MCF 10A (cell line): ENCODE measurements at regions of chr4 and their contacts with region 1.

Region 1: DNA sequence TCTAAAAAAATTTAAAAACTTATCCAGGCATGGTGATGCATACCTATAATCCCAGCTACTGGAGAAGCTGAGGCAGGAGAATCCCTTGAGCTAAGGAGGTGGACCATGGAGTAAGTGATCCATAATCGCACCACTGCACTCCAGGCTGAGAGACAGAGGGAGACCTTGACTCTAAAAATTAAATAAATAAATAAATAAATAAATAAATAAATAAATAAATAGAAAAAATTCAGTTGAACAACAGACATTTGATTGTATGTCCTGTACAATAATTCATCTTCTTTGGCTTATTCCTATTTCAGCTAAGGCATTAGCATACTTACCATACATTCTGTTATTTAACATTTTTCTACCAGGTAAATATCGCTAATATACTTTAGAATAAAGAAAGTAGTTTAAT is 726.1 kb upstream of the GALNTL6 start:
- DNase-seq: no peak
- H3K4me3 Mint-ChIP-seq: no peak overlapping the region
- H3K27ac Mint-ChIP-seq: no peak overlapping the region
- H3K4me1 Mint-ChIP-seq: peaks cover 3% of the 10 kb centered on the region
- H3K27me3 Mint-ChIP-seq: no peaks in the 10 kb centered on the region
- CTCF ChIP-seq: no peak

Region 2: DNA sequence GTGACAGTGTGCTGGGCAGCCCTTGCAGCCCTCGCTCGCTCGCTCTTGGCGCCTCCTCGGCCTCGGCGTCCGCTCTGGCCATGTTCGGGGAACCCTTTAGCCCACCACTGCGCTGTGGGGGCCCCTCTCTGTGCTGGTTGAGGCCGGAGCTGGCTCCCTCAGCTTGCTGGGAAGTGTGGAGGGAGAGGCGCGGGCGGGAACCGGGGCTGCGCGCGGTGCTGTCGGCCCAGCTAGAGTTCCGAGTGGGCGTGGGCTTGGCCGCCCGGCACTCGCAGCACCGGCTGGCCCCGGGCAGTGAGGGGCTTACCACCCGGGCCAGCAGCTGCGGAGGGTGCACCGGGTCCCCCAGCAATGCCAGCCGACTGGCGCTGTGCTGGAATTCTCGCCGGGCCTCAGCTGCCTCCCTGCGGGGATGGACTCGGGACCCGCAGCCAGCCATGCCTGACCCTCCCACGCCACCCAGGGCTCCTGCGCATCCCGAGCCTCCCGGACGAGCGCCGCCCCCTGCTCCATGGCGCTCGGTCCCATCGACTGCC is 44.0 kb before region 1 on chr4:
- CTCF ChIA-PET with region 1: no interaction called
- POLR2A ChIA-PET with region 1: no interaction called
- intact Hi-C with region 1: no loop called
- DNase-seq: no peak
- H3K4me3 Mint-ChIP-seq: no peak overlapping the region
- H3K27ac Mint-ChIP-seq: no peak overlapping the region
- H3K4me1 Mint-ChIP-seq: no peaks in the 10 kb centered on the region
- H3K27me3 Mint-ChIP-seq: no peaks in the 10 kb centered on the region
- CTCF ChIP-seq: no peak

Region 3: DNA sequence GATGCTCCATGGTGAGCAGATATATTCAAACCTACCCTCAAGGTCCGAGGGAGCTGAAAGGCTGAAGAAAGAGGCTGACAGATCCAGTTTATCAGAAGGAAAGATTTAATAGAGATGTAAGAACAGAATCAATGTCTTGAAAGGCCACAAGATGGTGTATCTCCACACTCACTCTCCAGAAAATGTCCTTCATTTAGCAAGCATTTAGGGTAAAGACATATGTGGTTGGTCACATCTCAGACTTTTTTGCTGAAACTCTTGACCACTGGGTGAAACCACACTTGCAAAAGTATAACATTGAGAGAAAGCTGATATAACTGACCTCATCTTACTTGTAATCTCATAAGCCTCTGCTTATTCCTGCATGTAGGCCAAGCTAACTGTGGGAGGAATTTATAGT is 19.7 kb before region 1 on chr4:
- CTCF ChIA-PET with region 1: no interaction called
- POLR2A ChIA-PET with region 1: no interaction called
- intact Hi-C with region 1: loop called (anchors 1 kb)
- DNase-seq: peak; percentile 5
- H3K4me3 Mint-ChIP-seq: no peak overlapping the region
- H3K27ac Mint-ChIP-seq: no peak overlapping the region
- H3K4me1 Mint-ChIP-seq: no peaks in the 10 kb centered on the region
- H3K27me3 Mint-ChIP-seq: no peaks in the 10 kb centered on the region
- CTCF ChIP-seq: no peak

Region 4: GRCh38 chr4:171985129-171985528 is 898.0 kb after region 1 on chr4:
- CTCF ChIA-PET with region 1: no interaction called
- POLR2A ChIA-PET with region 1: no interaction called
- intact Hi-C with region 1: no loop called
- DNase-seq: peak; percentile 38
- H3K4me3 Mint-ChIP-seq: no peak overlapping the region
- H3K27ac Mint-ChIP-seq: no peak overlapping the region
- H3K4me1 Mint-ChIP-seq: no peaks in the 10 kb centered on the region
- H3K27me3 Mint-ChIP-seq: peaks cover 15% of the 10 kb centered on the region
- CTCF ChIP-seq: no peak